Activated naive CD4-positive, alpha-beta T cell treated with anti-CD3 and anti-CD28 coated beads for 36 hours (primary cell): ENCODE measurements at regions of chr19 and their contacts with region 1.

Region 1: GRCh38 chr19:52962394-52963246 is at the start of gene ZNF816:
- DNase-seq: peak; percentile 99
- H3K4me3 Mint-ChIP-seq: peak within 1 kb of the TSS; percentile 85
- H3K27ac Mint-ChIP-seq: peak within 1 kb of the TSS; percentile 87
- H3K4me1 Mint-ChIP-seq: peaks cover 16% of the 10 kb centered on the region
- H3K27me3 Mint-ChIP-seq: no peaks in the 10 kb centered on the region
- total RNA-seq, gene ZNF816: 10.4 to 10.7 TPM

Region 2: DNA sequence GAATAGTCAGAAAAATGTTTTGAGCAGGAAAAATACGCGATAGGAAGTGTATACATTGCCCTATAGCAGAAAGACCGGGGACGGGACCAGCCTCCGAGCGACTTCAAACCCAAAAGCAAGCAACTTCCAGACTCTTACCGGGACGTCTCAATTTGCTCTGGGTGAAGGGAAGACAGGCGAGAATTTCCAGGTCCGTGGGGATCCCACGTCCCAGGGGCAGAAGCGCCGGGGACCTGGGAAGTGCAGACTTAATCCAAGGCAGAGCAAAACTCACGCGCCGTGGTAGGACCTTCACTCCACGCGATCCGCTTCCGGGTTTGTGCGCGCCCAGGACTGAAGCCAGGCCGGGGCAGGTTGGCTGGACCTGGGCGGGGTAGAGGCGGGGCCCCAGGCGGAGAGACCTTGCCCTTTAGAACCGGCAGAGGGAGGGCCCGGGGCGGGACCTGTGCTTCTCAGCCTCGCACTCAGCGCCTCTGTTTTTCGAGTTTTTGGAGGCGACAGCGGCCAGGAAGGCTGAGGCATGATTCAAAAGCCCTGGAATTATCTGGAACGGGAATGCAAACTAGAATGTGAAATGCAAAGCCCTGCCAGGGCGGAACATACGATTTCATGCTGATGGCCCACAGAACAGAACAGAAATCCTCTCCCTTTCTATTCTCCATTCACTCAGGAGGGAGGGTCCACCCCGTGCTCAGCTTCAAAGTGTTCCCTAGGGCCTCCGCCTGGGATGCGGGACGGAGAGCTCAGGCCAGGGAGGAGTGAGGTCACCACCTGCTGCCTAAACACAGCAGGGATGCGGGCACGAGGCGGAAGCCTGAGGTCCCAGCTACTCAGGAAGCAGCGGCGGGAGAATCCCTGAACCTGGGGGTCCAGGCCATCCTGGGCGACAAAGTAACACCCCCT is 175.9 kb before region 1 on chr19 and contains the start of gene ZNF600:
- CTCF ChIA-PET with region 1: no interaction called
- intact Hi-C with region 1: loop called (anchors 10 kb)
- DNase-seq: peak; percentile 84
- H3K4me3 Mint-ChIP-seq: peak within 1 kb of the TSS; percentile 83
- H3K27ac Mint-ChIP-seq: peak within 1 kb of the TSS; percentile 50
- H3K4me1 Mint-ChIP-seq: peaks cover 28% of the 10 kb centered on the region
- H3K27me3 Mint-ChIP-seq: no peaks in the 10 kb centered on the region
- total RNA-seq, gene ZNF600: 4.8 to 4.9 TPM

Region 3: DNA sequence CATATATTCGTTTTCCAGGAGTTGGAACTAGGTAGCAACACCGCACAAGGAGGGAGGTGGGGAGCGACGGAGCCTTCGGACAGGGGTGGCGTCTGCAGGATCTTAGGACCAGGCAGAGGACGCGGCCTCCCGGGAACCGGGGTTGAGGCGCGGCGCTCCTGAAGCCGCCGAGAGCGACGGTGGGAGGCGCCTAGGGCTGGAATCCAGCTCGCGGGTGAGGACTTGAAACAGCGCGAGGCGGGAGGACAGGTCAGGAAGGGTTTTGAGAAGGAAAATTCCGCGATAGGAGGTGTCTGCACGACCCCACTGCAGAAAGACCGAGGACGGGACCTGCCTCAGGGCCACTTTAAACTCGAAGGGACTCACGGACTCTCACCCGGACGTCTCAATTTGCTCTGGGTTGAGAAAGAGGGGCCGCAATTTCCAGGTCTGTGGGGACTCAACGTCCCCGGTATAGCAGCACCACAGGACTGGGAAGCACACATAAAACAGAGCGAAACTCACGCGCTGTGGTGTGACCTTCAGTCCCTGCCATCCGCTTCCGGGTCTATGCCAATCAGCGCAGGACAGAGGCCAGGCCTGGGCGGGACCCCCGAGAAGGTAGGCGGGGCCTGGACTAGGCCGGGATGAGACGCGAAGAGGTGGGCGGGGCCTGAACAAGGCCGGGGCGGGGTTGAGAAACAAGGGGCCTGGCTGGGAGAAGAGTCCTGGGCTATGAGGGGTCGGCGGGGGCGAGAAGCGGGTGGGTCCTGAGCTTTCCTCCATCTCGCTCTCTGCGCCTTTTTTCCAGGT is 65.3 kb before region 1 on chr19 and contains the start of gene ZNF320:
- CTCF ChIA-PET with region 1: no interaction called
- intact Hi-C with region 1: loop called (anchors 1 kb)
- DNase-seq: peak; percentile 95
- H3K4me3 Mint-ChIP-seq: peak within 1 kb of the TSS; percentile 84
- H3K27ac Mint-ChIP-seq: peak within 1 kb of the TSS; percentile 89
- H3K4me1 Mint-ChIP-seq: peaks cover 7% of the 10 kb centered on the region
- H3K27me3 Mint-ChIP-seq: no peaks in the 10 kb centered on the region
- total RNA-seq, gene ZNF320: 4.2 to 4.6 TPM

Region 4: GRCh38 chr19:52993323-52994178 is 30.9 kb after region 1 on chr19:
- CTCF ChIA-PET with region 1: interaction called, 3 read pairs
- intact Hi-C with region 1: loop called (anchors 1 kb)
- DNase-seq: peak; percentile 91
- H3K4me3 Mint-ChIP-seq: peak overlapping the region; percentile 77
- H3K27ac Mint-ChIP-seq: no peak overlapping the region
- H3K4me1 Mint-ChIP-seq: peaks cover 13% of the 10 kb centered on the region
- H3K27me3 Mint-ChIP-seq: peaks cover 2% of the 10 kb centered on the region

Region 5: GRCh38 chr19:53103198-53103944 is 140.8 kb after region 1 on chr19 and contains the start of gene ZNF160:
- CTCF ChIA-PET with region 1: no interaction called
- intact Hi-C with region 1: loop called (anchors 2 kb)
- DNase-seq: peak; percentile 99
- H3K4me3 Mint-ChIP-seq: peak within 1 kb of the TSS; percentile 82
- H3K27ac Mint-ChIP-seq: peak within 1 kb of the TSS; percentile 84
- H3K4me1 Mint-ChIP-seq: peaks cover 22% of the 10 kb centered on the region
- H3K27me3 Mint-ChIP-seq: no peaks in the 10 kb centered on the region
- total RNA-seq, gene ZNF160: 23.5 to 25.2 TPM

Region 6: DNA sequence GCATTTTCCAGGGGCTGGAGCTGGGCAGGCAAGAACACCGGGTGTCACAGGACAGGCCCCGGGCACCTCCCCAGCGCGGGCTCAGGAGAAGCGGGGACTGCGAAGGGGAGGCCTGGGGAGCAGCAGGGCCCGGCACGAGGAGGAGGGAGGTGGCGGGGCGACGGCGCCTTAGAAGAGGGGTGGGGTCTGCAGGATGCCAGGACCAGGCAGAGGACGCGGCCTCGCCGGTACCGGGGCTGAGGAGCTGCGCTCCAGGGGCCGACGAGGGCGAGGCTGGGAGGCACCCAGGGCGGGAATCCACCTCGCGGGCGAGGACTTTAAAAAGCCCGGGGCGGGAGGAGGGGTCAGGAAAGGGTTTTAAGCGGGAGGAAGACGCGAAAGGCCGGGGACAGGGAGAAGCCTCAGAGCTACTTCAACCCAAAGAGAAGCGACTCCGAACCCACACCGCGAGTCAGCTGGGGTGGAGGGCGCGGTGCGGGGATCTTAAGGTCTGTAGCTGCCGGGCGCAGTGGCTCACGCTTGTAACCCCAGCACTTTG is 195.6 kb after region 1 on chr19:
- CTCF ChIA-PET with region 1: no interaction called
- intact Hi-C with region 1: loop called (anchors 2 kb)
- DNase-seq: peak; percentile 60
- H3K4me3 Mint-ChIP-seq: peak overlapping the region; percentile 85
- H3K27ac Mint-ChIP-seq: peak overlapping the region; percentile 72
- H3K4me1 Mint-ChIP-seq: peaks cover 13% of the 10 kb centered on the region
- H3K27me3 Mint-ChIP-seq: no peaks in the 10 kb centered on the region